ENCODE measurements at regions of chr15 and their contacts with region 1.

Region 1: DNA sequence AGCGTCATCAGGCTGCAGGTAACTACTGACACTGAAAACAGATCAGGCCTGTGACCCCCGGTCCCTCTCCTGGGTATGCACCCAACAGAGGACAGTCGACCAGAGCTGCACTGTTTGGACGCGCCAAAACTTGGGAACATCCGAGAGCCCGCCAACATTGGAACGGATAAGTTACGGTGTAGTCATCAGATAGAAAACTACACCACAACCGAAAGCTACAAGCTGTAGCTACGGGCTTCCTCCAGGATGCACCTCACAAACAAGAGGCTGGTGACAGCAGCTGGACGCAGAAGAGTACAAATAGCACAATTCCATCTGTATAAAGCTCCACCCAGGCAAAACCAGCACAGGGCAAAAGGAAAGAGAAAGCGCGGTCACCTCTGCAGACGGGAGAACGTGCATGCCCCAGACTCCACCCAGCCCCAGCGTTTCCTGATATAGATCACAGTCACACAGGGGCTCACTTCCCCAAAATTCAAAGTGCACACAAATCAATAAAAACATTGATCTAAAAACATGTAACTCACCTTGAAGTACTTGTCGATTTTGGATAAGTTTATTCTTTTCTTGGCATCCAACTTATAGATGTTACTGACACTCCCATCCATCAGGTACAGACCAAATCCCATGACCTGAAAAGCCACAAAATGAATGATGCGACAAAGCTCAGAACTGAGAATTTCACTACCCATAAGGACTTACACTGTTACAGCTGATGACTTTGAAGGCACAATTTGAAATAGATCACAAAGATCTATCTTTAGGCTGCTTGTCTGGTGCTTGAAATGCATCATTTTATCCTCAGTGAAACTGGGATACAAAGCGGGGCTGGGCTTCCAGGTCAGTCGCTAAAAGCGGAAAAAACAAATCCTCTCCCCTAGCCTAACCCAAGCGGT is 43.3 kb downstream of the CYFIP1 start:
- H3K4me3 Mint-ChIP-seq: no peak overlapping the region
- H3K27ac Mint-ChIP-seq: no peak overlapping the region
- H3K4me1 Mint-ChIP-seq: peaks cover 7% of the 10 kb centered on the region
- H3K27me3 Mint-ChIP-seq: no peaks in the 10 kb centered on the region

Region 2: GRCh38 chr15:22786868-22787698 is 149.7 kb before region 1 on chr15:
- intact Hi-C with region 1: no loop called
- H3K4me3 Mint-ChIP-seq: peak overlapping the region; percentile 86
- H3K27ac Mint-ChIP-seq: peak overlapping the region; percentile 60
- H3K4me1 Mint-ChIP-seq: peaks cover 14% of the 10 kb centered on the region
- H3K27me3 Mint-ChIP-seq: peaks cover 5% of the 10 kb centered on the region

Region 3: GRCh38 chr15:22872936-22873701 is 63.7 kb before region 1 on chr15:
- intact Hi-C with region 1: loop called (anchors 10 kb)
- H3K4me3 Mint-ChIP-seq: no peak overlapping the region
- H3K27ac Mint-ChIP-seq: no peak overlapping the region
- H3K4me1 Mint-ChIP-seq: no peaks in the 10 kb centered on the region
- H3K27me3 Mint-ChIP-seq: no peaks in the 10 kb centered on the region

Region 4: DNA sequence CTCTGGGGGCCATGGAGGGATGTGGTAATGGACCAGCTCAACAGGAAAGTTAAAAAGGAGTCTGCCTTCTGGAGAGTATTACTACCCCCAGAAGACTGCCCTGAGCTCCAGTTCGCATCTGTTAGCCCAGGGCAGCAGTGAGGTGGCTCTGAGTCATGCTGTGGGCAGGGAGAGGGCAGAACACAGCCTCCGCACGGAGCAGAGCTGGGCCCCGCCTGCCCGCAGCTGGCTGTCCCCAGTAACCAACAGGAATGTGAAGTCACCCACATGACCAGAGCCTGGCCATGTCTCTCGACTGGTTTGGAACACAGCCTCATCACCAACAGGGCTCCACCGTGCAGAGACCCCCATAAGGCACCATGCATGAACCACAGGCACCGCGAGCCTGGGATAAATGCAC is 18.8 kb before region 1 on chr15:
- intact Hi-C with region 1: loop called (anchors 1 kb)
- H3K4me3 Mint-ChIP-seq: no peak overlapping the region
- H3K27ac Mint-ChIP-seq: no peak overlapping the region
- H3K4me1 Mint-ChIP-seq: no peaks in the 10 kb centered on the region
- H3K27me3 Mint-ChIP-seq: no peaks in the 10 kb centered on the region

Region 5: GRCh38 chr15:22949074-22949547 is 12.3 kb after region 1 on chr15:
- intact Hi-C with region 1: no loop called
- H3K4me3 Mint-ChIP-seq: peak overlapping the region; percentile 27
- H3K27ac Mint-ChIP-seq: peak overlapping the region; percentile 78
- H3K4me1 Mint-ChIP-seq: peaks cover 65% of the 10 kb centered on the region
- H3K27me3 Mint-ChIP-seq: no peaks in the 10 kb centered on the region

Region 6: DNA sequence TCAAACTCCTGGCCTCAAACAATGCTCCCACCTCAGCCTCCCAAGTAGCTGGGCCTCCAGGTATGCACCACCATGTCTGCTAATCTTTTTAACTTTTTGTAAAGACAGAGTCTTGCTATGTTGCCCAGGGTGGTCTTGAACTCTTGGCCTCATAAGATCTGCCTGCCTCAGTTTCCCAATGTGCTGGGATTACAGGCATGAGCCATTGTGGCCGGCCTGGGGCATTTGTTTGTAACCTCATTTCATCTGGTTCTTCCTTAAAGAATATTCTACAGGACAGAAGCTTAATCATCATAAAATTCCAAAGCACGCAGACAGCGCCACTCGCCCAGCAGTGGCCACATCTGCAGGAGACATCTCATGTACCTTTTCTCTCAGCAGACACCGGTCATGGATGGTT is 66.9 kb after region 1 on chr15:
- intact Hi-C with region 1: no loop called
- H3K4me3 Mint-ChIP-seq: no peak overlapping the region
- H3K27ac Mint-ChIP-seq: no peak overlapping the region
- H3K4me1 Mint-ChIP-seq: no peaks in the 10 kb centered on the region
- H3K27me3 Mint-ChIP-seq: no peaks in the 10 kb centered on the region

Region 7: GRCh38 chr15:23073890-23074646 is 137.2 kb after region 1 on chr15:
- intact Hi-C with region 1: no loop called
- H3K4me3 Mint-ChIP-seq: peak overlapping the region; percentile 5
- H3K27ac Mint-ChIP-seq: no peak overlapping the region
- H3K4me1 Mint-ChIP-seq: no peaks in the 10 kb centered on the region
- H3K27me3 Mint-ChIP-seq: no peaks in the 10 kb centered on the region

Measured in dendritic cell treated with granulocyte-macrophage colony-stimulating factor and Interleukin-4, amounts not matched to agents 40 ng/mL and 50 ng/mL, for 4 days (primary cell).